ENCODE measurements at regions of chr3 and their contacts with region 1.

Region 1: GRCh38 chr3:105722943-105723556 is 145.8 kb downstream of the CBLB start:
- DNase-seq: no peak
- ATAC-seq: peak; percentile 93
- H3K4me3 Mint-ChIP-seq: peak overlapping the region; percentile 66
- H3K27ac Mint-ChIP-seq: peak overlapping the region; percentile 88
- H3K4me1 Mint-ChIP-seq: peaks cover 19% of the 10 kb centered on the region
- H3K27me3 Mint-ChIP-seq: no peaks in the 10 kb centered on the region
- CTCF ChIP-seq: no peak

Region 2: GRCh38 chr3:105214575-105214974 is 508.5 kb before region 1 on chr3:
- CTCF ChIA-PET with region 1: no interaction called
- POLR2A ChIA-PET with region 1: no interaction called
- intact Hi-C with region 1: no loop called
- DNase-seq: no peak
- ATAC-seq: no peak
- H3K4me3 Mint-ChIP-seq: no peak overlapping the region
- H3K27ac Mint-ChIP-seq: no peak overlapping the region
- H3K4me1 Mint-ChIP-seq: no peaks in the 10 kb centered on the region
- H3K27me3 Mint-ChIP-seq: peaks cover 5% of the 10 kb centered on the region
- CTCF ChIP-seq: no peak

Region 3: DNA sequence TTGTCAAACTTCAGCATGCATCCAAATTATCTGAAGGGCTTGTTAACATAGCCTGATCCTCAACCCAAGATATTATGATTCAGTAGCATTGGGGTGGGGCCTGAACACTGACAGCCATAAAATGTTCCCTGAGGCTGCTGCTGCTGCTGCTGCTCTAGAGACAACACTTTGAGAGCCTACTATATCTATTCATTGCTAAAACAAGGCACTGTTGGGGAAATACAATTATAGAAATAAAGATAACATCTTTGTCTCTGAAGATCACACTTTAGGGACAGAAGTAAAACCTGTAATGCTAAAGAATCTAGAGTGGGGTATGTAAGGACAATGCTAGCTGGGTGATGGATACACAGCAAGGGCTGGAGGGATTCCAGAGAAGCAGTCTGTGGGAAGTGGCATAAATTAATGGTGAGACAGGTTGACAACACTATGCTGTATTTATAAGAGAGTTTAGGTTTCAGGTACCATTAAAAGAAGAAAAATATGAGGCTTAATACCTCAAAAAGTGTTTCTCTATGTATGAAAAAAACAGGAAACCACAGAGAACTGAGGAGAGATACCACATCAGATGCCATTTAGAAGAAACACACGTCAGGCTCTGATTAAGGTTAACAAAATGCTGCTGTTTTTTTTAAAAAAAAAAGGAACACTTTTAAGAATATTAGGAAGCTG is 29.8 kb after region 1 on chr3:
- CTCF ChIA-PET with region 1: no interaction called
- POLR2A ChIA-PET with region 1: interaction called, 5 read pairs
- intact Hi-C with region 1: loop called (anchors 1 kb)
- DNase-seq: no peak
- ATAC-seq: peak; percentile 51
- H3K4me3 Mint-ChIP-seq: peak overlapping the region; percentile 33
- H3K27ac Mint-ChIP-seq: peak overlapping the region; percentile 65
- H3K4me1 Mint-ChIP-seq: peaks cover 53% of the 10 kb centered on the region
- H3K27me3 Mint-ChIP-seq: no peaks in the 10 kb centered on the region
- CTCF ChIP-seq: no peak

Region 4: GRCh38 chr3:105836533-105836932 is 113.5 kb after region 1 on chr3:
- CTCF ChIA-PET with region 1: no interaction called
- POLR2A ChIA-PET with region 1: no interaction called
- intact Hi-C with region 1: loop called (anchors 1 kb)
- DNase-seq: no peak
- ATAC-seq: no peak
- H3K4me3 Mint-ChIP-seq: peak overlapping the region; percentile 72
- H3K27ac Mint-ChIP-seq: peak overlapping the region; percentile 82
- H3K4me1 Mint-ChIP-seq: peaks cover 63% of the 10 kb centered on the region
- H3K27me3 Mint-ChIP-seq: no peaks in the 10 kb centered on the region
- CTCF ChIP-seq: no peak

Region 5: GRCh38 chr3:105853801-105854432 is 130.9 kb after region 1 on chr3:
- CTCF ChIA-PET with region 1: no interaction called
- POLR2A ChIA-PET with region 1: interaction called, 3 read pairs
- intact Hi-C with region 1: loop called (anchors 1 kb)
- DNase-seq: peak; percentile 46
- ATAC-seq: peak; percentile 99
- H3K4me3 Mint-ChIP-seq: peak overlapping the region; percentile 66
- H3K27ac Mint-ChIP-seq: peak overlapping the region; percentile 99
- H3K4me1 Mint-ChIP-seq: peaks cover 51% of the 10 kb centered on the region
- H3K27me3 Mint-ChIP-seq: no peaks in the 10 kb centered on the region
- CTCF ChIP-seq: no peak

Region 6: GRCh38 chr3:105862217-105862616 is 139.2 kb after region 1 on chr3:
- CTCF ChIA-PET with region 1: no interaction called
- POLR2A ChIA-PET with region 1: no interaction called
- intact Hi-C with region 1: loop called (anchors 1 kb)
- DNase-seq: no peak
- ATAC-seq: peak; percentile 94
- H3K4me3 Mint-ChIP-seq: no peak overlapping the region
- H3K27ac Mint-ChIP-seq: no peak overlapping the region
- H3K4me1 Mint-ChIP-seq: peaks cover 50% of the 10 kb centered on the region
- H3K27me3 Mint-ChIP-seq: no peaks in the 10 kb centered on the region
- CTCF ChIP-seq: no peak

Region 7: DNA sequence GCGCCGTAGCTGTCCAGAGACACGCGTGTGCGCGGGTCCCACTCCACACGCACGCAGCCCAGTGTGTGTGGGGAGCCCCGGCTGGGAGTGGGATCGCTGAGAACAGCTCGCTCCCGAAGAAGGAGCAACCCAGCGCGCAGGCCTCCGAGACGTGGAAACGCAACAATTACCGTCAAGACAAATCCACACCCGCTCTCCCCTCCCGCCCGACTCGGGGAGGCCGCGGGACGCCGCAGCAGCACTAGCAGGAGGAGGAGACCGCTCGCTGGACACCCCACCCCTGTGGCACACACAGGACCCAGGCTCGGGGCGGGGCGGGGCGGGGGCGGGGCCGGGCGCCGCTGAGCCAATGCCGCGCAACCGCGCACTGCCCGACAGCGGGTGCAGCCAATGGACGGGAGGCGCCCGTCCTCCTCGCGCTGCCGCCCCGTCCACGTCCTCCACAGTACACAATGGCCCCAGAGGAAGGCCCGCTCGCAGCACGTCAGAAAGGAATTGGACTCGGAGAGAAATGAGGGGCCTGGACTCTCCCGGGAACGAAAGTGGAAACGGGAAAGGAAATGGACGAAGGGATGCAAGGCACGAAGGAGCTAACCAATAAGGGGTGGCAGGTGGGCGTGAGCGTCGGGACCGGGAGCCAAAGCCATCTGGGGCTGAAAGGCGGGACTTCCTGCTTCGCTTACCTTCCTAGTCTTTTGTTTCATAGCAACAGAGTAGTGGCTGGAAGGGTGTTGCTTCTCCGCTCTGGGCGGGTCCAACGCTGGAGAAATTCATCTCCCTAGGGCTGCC is 145.9 kb after region 1 on chr3 and contains the start of gene CBLB:
- CTCF ChIA-PET with region 1: no interaction called
- POLR2A ChIA-PET with region 1: no interaction called
- intact Hi-C with region 1: loop called (anchors 2 kb)
- DNase-seq: peak; percentile 78
- ATAC-seq: peak; percentile 93
- H3K4me3 Mint-ChIP-seq: peak within 1 kb of the TSS; percentile 100
- H3K27ac Mint-ChIP-seq: peak within 1 kb of the TSS; percentile 99
- H3K4me1 Mint-ChIP-seq: peaks cover 53% of the 10 kb centered on the region
- H3K27me3 Mint-ChIP-seq: no peaks in the 10 kb centered on the region
- CTCF ChIP-seq: no peak
- total RNA-seq, gene CBLB: 69.2 and 78.1 TPM in 2 replicates

Region 8: DNA sequence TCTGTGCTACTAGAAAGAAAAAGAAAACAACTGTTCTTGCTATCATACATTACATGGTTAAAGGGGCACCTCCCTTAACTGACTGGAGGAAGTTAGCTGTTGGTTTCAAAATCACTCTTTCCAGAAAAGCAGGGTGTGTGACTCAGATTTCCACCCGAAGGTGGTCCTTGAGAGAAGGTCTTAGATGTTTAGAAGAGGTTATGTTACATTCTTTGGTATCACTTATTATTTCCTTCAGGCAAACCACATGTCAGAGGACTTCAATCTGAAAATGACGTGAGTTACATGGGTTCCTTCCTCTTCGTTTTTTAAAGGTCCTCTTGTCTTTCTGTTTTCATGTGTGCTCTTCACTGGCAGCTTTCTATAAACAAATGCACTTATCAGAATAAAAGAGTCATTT is 453.7 kb after region 1 on chr3:
- CTCF ChIA-PET with region 1: no interaction called
- POLR2A ChIA-PET with region 1: no interaction called
- intact Hi-C with region 1: loop called (anchors 2 kb)
- DNase-seq: no peak
- ATAC-seq: peak; percentile 77
- H3K4me3 Mint-ChIP-seq: peak overlapping the region; percentile 60
- H3K27ac Mint-ChIP-seq: peak overlapping the region; percentile 81
- H3K4me1 Mint-ChIP-seq: peaks cover 38% of the 10 kb centered on the region
- H3K27me3 Mint-ChIP-seq: no peaks in the 10 kb centered on the region
- CTCF ChIP-seq: no peak

Measured in activated B cell treated with CpG ODN at 0.5 μM for 24 hours (primary cell).